CD8-positive, alpha-beta T cell (primary cell): ENCODE measurements at regions of chr5 and their contacts with region 1.

Region 1: GRCh38 chr5:75048457-75048953 is 3.9 kb downstream of the GCNT4 start:
- DNase-seq: peak in 1 of 9 experiments; percentile 51
- ATAC-seq: no peak
- H3K4me3 ChIP-seq: peak overlapping the region; percentile 8 to 15
- H3K4me3 Mint-ChIP-seq: peak overlapping the region; percentile 46
- H3K27ac ChIP-seq: peak overlapping the region in 1 of 2 experiments; percentile 33
- H3K27ac Mint-ChIP-seq: peak overlapping the region; percentile 81
- H3K4me1 ChIP-seq: peaks cover 53% of the 10 kb centered on the region
- H3K4me1 Mint-ChIP-seq: peaks cover 81% of the 10 kb centered on the region
- H3K27me3 ChIP-seq: peaks cover 0 to 4% of the 10 kb centered on the region in 2 experiments
- H3K27me3 Mint-ChIP-seq: no peaks in the 10 kb centered on the region
- CTCF ChIP-seq: no peak

Region 2: GRCh38 chr5:75037135-75037534 is 11.4 kb before region 1 on chr5:
- CTCF ChIA-PET with region 1: interaction called, 25 read pairs
- POLR2A ChIA-PET with region 1: interaction called, 9 read pairs
- intact Hi-C with region 1: loop called in 1 of 2 experiments (anchors 1 kb)
- DNase-seq: no peak
- ATAC-seq: no peak
- H3K4me3 ChIP-seq: no peak overlapping the region
- H3K4me3 Mint-ChIP-seq: no peak overlapping the region
- H3K27ac ChIP-seq: no peak overlapping the region
- H3K27ac Mint-ChIP-seq: peak overlapping the region; percentile 80
- H3K4me1 ChIP-seq: peaks cover 49% of the 10 kb centered on the region
- H3K4me1 Mint-ChIP-seq: peaks cover 79% of the 10 kb centered on the region
- H3K27me3 ChIP-seq: no peaks in the 10 kb centered on the region
- H3K27me3 Mint-ChIP-seq: no peaks in the 10 kb centered on the region
- CTCF ChIP-seq: no peak